MCF 10A (cell line): ENCODE measurements at regions of chr9 and their contacts with region 1.

Region 1: DNA sequence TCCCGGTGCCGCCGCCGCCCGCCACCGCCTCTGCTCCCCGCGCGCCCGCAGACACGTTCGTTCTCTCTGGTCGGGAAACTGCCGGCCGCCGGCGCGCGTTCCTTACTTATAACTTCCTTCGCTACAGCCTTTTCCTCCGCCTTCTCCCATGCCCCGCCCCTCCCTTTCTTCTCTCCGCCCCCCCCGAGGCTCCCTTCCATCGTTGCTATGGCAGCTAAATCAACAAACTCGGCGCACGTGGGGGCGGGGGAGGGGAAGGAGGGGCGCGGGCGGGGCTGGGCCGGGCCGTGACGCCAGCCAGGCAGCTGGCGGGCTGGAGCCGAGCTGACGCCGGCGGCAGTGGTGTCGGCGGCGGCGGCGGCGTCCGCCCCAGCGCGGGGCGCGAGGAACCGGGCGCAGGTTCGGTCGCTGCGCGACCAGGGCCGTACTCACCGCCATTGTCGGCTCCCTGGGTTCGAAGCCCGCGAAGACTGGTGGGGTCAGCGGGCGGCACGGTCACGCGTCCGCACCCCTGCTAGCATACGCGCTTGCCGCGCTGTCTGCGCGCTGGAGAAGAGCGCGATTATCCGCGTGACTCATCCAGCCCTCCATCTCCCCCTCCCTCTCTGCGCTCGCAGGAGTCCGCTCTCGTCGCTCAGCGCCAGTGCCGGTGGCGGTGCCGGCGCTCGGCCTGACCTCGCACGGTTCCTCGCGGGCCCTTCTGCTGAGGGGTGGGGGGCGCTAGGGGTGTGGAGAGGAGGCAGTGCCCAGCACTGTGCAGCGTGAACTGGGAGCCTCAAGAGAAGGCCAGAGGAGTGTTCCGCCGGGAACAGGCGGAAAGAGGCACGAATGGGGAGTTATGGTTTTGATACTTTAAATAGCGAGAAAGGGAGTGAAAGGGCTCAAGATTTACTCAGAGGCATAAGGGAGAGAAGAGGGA is at the start of gene KLF4:
- DNase-seq: peak; percentile 95
- H3K4me3 Mint-ChIP-seq: peak within 1 kb of the TSS; percentile 94
- H3K27ac Mint-ChIP-seq: peak within 1 kb of the TSS; percentile 96
- H3K4me1 Mint-ChIP-seq: peaks cover 18% of the 10 kb centered on the region
- H3K27me3 Mint-ChIP-seq: no peaks in the 10 kb centered on the region
- CTCF ChIP-seq: no peak
- total RNA-seq, gene KLF4: 94.9 and 96.0 TPM in 2 replicates

Region 2: GRCh38 chr9:106731910-106732309 is 758.0 kb before region 1 on chr9:
- CTCF ChIA-PET with region 1: no interaction called
- POLR2A ChIA-PET with region 1: no interaction called
- intact Hi-C with region 1: no loop called
- DNase-seq: no peak
- H3K4me3 Mint-ChIP-seq: no peak overlapping the region
- H3K27ac Mint-ChIP-seq: no peak overlapping the region
- H3K4me1 Mint-ChIP-seq: no peaks in the 10 kb centered on the region
- H3K27me3 Mint-ChIP-seq: no peaks in the 10 kb centered on the region
- CTCF ChIP-seq: no peak

Region 3: DNA sequence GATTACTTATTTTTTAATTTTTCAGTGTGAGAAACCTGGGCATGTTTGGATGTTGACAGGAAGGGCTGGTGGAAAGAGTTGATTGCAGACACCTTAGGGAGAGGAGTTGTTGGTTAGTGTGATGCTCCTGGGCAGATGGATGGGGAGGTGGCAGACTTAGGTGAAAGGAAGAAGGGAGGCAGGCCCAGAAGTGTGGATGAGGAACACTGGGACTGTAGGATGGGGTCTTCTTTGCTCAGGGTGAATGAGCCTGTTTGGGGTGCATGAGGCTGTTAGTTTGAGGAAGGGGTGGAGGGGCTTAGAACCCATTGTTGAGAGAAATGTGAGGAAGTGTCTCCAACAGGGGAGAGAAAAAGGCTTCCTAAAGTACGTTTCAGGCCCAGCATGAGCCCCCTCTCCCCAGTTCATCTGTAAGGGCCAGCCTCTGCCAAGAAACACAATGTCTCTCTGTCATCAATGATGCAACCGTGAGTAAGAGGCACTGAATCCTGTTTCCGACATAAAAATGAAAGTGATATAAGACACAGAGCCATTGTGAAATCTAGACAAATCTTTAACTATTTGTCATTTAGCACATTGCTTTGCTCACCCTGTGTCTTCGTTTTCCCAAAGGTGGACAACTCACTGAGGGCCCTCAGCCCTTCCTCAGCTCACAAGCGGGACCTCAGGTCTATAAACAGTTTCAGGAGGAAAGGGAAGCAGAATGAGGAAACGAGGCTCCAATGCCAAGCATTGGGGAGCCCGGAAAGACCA is 58.3 kb after region 1 on chr9:
- CTCF ChIA-PET with region 1: no interaction called
- POLR2A ChIA-PET with region 1: no interaction called
- intact Hi-C with region 1: loop called (anchors 1 kb)
- DNase-seq: peak; percentile 93
- H3K4me3 Mint-ChIP-seq: peak overlapping the region; percentile 58
- H3K27ac Mint-ChIP-seq: peak overlapping the region; percentile 90
- H3K4me1 Mint-ChIP-seq: peaks cover 20% of the 10 kb centered on the region
- H3K27me3 Mint-ChIP-seq: no peaks in the 10 kb centered on the region
- CTCF ChIP-seq: no peak

Region 4: GRCh38 chr9:107737987-107738743 is 248.2 kb after region 1 on chr9:
- CTCF ChIA-PET with region 1: interaction called, 7 read pairs
- POLR2A ChIA-PET with region 1: interaction called, 49 read pairs
- intact Hi-C with region 1: loop called (anchors 1 kb)
- DNase-seq: peak; percentile 95
- H3K4me3 Mint-ChIP-seq: peak overlapping the region; percentile 38
- H3K27ac Mint-ChIP-seq: peak overlapping the region; percentile 99
- H3K4me1 Mint-ChIP-seq: peaks cover 74% of the 10 kb centered on the region
- H3K27me3 Mint-ChIP-seq: no peaks in the 10 kb centered on the region
- CTCF ChIP-seq: no peak

Region 5: DNA sequence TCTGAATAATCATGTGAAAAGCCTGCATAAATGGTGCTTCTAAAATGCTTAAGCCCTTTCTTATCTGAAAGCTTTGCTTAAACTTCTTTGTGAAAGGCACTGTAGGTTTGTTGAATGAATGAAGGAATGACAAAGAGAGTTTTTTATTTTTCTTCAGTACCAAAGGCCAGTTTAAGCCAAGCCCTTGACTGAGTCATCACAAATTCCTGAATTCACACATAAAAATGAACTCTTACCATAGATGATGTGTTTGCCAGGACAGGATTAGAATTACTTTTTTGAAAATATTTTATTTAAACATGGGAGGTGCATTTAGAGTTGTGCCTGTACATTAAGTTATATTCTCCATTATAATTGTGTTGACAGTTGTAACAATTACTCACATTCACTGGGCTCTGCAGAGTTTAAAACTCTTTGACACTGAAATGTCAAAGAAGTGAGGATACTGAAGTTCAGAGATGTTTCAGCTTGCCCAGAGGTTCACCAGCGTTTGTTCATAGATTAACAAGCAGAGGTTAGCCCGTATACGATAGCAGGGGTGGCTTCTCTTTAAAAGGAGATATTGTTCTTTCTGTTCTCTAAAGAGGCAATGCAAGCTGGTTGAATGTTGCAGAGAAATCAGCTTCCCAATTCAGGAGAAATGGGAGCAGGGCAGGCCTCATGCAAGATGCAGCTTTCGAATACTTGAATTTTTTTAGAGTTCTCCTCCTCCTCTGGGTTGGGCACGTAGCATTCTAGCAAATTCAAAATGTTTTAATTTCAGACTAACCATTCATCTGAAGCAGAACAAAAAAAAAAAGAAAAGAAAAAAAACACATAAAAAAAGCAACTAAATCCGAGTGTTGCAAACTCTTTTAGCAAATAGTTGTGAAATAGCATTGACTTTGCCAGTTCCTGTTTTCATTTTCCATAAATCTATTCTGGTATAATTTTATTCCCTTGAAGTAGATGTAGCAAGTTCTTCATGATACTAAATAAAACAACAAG is 358.3 kb after region 1 on chr9:
- CTCF ChIA-PET with region 1: no interaction called
- POLR2A ChIA-PET with region 1: no interaction called
- intact Hi-C with region 1: loop called (anchors 10 kb)
- DNase-seq: peak; percentile 17
- H3K4me3 Mint-ChIP-seq: no peak overlapping the region
- H3K27ac Mint-ChIP-seq: no peak overlapping the region
- H3K4me1 Mint-ChIP-seq: peaks cover 11% of the 10 kb centered on the region
- H3K27me3 Mint-ChIP-seq: no peaks in the 10 kb centered on the region
- CTCF ChIP-seq: no peak

Region 6: GRCh38 chr9:108272349-108272899 is 782.5 kb after region 1 on chr9:
- CTCF ChIA-PET with region 1: interaction called, 7 read pairs
- POLR2A ChIA-PET with region 1: interaction called, 13 read pairs
- intact Hi-C with region 1: loop called (anchors 1 kb)
- DNase-seq: peak; percentile 73
- H3K4me3 Mint-ChIP-seq: peak overlapping the region; percentile 52
- H3K27ac Mint-ChIP-seq: peak overlapping the region; percentile 93
- H3K4me1 Mint-ChIP-seq: peaks cover 30% of the 10 kb centered on the region
- H3K27me3 Mint-ChIP-seq: no peaks in the 10 kb centered on the region
- CTCF ChIP-seq: peak; percentile 79